Activated CD4-positive, alpha-beta T cell treated with anti-CD3 and anti-CD28 coated beads for 36 hours (primary cell): ENCODE measurements at regions of chr4 and their contacts with region 1.

Region 1: DNA sequence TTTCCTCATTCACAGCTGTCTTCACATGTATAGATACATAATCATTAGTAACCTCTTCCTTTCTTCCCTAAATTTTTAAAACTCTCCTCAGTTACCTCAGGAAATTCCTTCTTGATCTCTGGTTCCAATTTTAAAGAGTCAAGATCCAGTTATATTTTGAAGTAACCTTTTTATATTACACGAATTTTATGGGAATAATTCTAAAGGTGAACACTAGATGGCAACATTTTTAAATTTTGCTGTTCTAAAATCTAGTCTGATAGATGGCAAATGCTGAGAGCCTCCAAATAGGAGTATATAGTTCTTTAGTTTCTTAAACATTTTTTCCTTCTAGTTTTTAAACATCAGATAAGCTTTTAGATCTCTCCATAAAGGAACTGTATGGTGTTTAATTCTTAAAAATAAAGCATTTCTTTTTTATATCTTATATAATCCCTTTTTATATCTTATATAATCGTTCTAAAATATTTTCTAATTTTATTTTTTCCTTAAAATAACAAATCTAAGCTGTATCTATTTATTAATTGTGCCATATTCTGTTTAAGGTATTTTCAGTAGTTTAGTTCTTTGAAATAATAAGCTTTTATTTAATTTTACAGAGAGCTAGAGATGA is 37.9 kb upstream of the PAPSS1 start:
- DNase-seq: no peak
- ATAC-seq: no peak
- H3K4me3 Mint-ChIP-seq: no peak overlapping the region
- H3K27ac Mint-ChIP-seq: no peak overlapping the region
- H3K4me1 Mint-ChIP-seq: peaks cover 3% of the 10 kb centered on the region
- H3K27me3 Mint-ChIP-seq: no peaks in the 10 kb centered on the region

Region 2: DNA sequence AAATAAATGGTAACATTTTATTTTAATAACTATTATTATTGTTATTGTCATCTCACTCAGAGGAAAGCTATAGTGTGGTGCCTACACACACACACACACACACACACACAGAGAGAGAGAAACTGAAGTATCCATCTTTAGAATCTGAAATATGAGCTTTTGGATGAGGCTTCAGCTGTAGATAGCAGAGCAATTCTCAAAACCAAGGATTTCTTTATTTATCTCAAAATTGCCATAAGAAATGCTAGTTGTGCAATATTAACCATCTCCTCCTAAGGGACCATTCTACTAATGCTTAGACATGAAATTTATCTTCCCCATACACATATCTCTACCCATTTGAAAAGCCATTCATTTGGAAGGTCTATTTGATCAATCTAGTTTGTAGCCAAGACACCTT is 16.7 kb after region 1 on chr4:
- CTCF ChIA-PET with region 1: interaction called, 12 read pairs
- POLR2A ChIA-PET with region 1: no interaction called
- intact Hi-C with region 1: no loop called
- DNase-seq: no peak
- ATAC-seq: no peak
- H3K4me3 Mint-ChIP-seq: no peak overlapping the region
- H3K27ac Mint-ChIP-seq: no peak overlapping the region
- H3K4me1 Mint-ChIP-seq: no peaks in the 10 kb centered on the region
- H3K27me3 Mint-ChIP-seq: peaks cover 17% of the 10 kb centered on the region

Region 3: DNA sequence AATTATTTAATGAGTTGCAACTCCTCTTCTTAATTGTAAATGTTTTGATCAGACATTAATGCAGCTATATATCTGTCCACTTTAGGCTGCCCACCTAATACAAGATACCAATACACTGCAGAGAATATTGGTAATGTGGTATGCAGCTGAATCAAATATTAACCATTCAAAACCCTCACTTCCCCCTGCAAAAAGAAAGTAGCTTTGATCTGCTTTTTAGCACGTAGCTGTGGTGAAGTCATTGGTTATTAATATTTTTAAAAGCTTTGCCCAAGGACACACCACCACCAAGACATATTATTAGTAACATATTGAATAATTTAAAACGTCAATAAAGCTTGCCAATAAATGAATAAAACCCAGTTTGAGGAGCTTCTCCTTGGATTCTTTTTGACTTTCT is 144.7 kb after region 1 on chr4:
- CTCF ChIA-PET with region 1: interaction called, 10 read pairs
- POLR2A ChIA-PET with region 1: no interaction called
- intact Hi-C with region 1: no loop called
- DNase-seq: no peak
- ATAC-seq: no peak
- H3K4me3 Mint-ChIP-seq: no peak overlapping the region
- H3K27ac Mint-ChIP-seq: no peak overlapping the region
- H3K4me1 Mint-ChIP-seq: peaks cover 5% of the 10 kb centered on the region
- H3K27me3 Mint-ChIP-seq: peaks cover 8% of the 10 kb centered on the region

Region 4: DNA sequence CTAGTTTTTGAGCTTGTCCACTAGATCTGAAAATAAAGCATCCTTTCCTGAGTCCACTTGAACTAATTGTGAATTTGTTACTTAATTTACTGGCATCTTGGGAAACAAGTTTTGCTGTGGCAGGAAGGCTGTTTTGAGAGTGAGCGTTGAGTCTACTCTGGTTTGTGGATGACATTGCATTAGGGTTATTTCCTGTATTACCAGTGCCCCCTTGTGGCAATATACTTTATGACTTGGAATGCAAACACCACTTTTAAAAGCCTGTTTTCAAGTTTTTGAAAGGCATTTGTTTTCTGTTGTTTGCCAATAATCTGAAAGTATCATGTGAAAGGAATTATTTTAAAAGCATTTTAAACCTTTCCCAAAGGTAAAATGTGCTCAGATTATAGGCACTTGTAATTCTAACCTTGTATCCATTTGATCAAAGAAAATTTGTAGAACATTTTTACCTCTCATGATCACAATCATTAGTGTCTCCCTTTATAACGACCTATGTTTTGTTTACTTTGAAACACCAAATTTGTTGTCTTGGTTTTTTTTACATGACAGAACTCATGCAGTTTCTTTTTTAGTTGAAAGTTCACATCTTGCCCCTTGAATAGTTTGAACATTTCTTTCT is 155.4 kb after region 1 on chr4:
- CTCF ChIA-PET with region 1: interaction called, 75 read pairs
- POLR2A ChIA-PET with region 1: no interaction called
- intact Hi-C with region 1: loop called (anchors 1 kb)
- DNase-seq: peak; percentile 30
- ATAC-seq: peak; percentile 74
- H3K4me3 Mint-ChIP-seq: no peak overlapping the region
- H3K27ac Mint-ChIP-seq: no peak overlapping the region
- H3K4me1 Mint-ChIP-seq: peaks cover 2% of the 10 kb centered on the region
- H3K27me3 Mint-ChIP-seq: no peaks in the 10 kb centered on the region

Region 5: GRCh38 chr4:108570993-108571569 is 813.1 kb after region 1 on chr4:
- CTCF ChIA-PET with region 1: no interaction called
- POLR2A ChIA-PET with region 1: no interaction called
- intact Hi-C with region 1: loop called in 1 of 2 experiments (anchors 5 kb)
- DNase-seq: no peak
- ATAC-seq: no peak
- H3K4me3 Mint-ChIP-seq: no peak overlapping the region
- H3K27ac Mint-ChIP-seq: no peak overlapping the region
- H3K4me1 Mint-ChIP-seq: peaks cover 23% of the 10 kb centered on the region
- H3K27me3 Mint-ChIP-seq: no peaks in the 10 kb centered on the region